Left ventricle myocardium inferior (tissue), 1 donor: ENCODE measurements at regions of chr5 and their contacts with region 1.

Region 1: DNA sequence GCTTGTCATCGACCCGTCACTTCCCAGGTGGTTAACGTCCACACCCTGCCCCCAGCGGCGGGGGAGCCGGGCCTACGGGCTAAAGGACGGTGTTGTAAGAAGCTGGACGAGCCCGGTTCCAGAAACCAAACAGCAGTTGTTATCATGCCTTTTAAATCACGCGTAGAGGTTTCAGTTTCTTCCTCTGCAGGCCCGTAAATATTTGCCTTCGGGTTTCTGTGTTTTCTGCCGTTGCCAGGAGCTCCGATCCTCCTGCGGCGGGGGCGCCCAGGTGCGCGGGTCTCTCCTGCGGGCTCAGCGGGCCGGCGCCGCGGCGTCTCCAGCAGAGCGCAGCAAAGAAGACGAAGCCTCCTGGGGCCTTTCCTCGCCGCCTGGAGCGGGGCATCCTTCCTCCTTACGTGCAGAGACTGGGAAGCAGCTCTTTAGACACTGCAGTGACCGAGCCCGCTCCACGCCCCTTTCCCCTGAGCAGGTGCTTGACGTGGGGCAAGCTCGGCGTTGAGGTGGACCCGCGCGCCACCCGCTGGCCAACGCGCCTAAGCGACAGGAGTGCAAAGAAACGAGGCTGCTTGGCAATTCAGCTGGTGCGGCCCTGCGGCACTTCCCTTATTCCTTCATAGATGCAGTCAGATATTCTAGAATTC is 21.8 kb upstream of the TTC1 start:
- DNase-seq: peak; percentile 73
- H3K4me3 ChIP-seq: peak overlapping the region; percentile 66
- H3K27ac ChIP-seq: no peak overlapping the region
- H3K4me1 ChIP-seq: peaks cover 9% of the 10 kb centered on the region
- H3K27me3 ChIP-seq: peaks cover 58% of the 10 kb centered on the region
- CTCF ChIP-seq: peak; percentile 80

Region 2: GRCh38 chr5:159286420-159287035 is 700.6 kb before region 1 on chr5:
- intact Hi-C with region 1: loop called (anchors 10 kb)
- DNase-seq: no peak
- H3K4me3 ChIP-seq: no peak overlapping the region
- H3K27ac ChIP-seq: no peak overlapping the region
- H3K4me1 ChIP-seq: no peaks in the 10 kb centered on the region
- H3K27me3 ChIP-seq: no peaks in the 10 kb centered on the region
- CTCF ChIP-seq: peak; percentile 60

Region 3: DNA sequence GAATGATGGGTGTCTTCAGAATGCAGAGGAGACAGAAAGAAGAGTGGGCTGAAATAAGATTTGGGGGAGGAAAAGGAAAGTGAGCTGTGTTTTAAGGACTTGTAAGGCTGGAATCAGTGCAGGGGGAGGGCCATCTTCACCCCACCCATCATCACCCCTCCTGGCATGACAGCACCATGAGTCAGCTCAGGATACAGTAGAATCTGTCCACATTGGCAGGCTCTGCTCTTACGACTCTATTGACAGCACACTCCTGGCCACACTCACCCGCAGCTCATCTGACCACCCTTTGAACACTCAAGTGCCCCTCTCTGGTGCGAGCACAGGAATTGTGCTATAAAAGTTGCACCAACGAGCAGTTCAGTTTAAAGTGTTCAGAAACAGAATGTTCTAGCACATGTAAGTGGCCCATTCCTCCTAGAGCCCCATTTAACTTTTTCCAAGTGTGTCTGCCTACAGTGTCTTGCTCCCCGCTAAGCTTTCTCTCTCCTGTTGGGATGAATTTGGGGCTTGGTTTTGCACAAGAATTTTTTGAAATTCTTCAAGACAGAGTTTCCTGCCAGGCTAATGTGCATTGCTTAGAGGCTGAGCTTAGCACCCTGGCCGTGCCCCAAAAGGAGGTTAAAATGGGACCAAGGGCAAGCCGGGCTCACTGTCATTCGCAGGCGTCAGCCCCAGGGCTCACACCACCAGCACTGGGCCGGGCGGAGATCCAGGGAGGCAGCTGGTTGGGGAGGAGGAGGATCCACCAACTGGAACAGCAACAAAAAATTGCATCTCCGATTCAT is 58.8 kb before region 1 on chr5:
- intact Hi-C with region 1: no loop called
- DNase-seq: peak; percentile 68
- H3K4me3 ChIP-seq: no peak overlapping the region
- H3K27ac ChIP-seq: peak overlapping the region; percentile 79
- H3K4me1 ChIP-seq: peaks cover 16% of the 10 kb centered on the region
- H3K27me3 ChIP-seq: peaks cover 4% of the 10 kb centered on the region
- CTCF ChIP-seq: no peak

Region 4: DNA sequence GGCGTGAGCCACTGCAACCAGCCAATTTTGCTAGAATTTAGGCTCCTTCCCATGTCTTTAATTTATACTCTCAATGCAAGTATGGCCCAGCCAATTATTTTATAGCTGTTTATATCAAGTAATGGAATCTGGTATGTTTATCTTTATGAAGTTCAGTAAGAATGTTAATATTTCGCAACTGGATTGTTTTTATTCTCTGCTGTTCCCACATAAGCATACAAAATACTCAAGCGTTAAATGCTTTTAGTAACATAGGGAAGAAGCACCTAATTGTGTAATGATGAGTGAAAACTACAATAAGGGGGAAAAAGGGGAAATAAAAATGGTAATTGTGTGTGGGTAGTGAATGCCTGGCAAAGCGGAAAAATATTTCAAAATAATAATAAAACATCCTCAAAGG is 110.8 kb after region 1 on chr5:
- intact Hi-C with region 1: no loop called
- DNase-seq: no peak
- H3K4me3 ChIP-seq: no peak overlapping the region
- H3K27ac ChIP-seq: no peak overlapping the region
- H3K4me1 ChIP-seq: peaks cover 7% of the 10 kb centered on the region
- H3K27me3 ChIP-seq: no peaks in the 10 kb centered on the region
- CTCF ChIP-seq: no peak